ENCODE measurements at regions of chr5 and their contacts with region 1.

Region 1: GRCh38 chr5:139293504-139294373 is at the start of gene MATR3:
- DNase-seq: peak; percentile 83 to 94 (median 91)
- ATAC-seq: peak; percentile 95
- H3K4me3 ChIP-seq: peak within 1 kb of the TSS; percentile 87
- H3K4me3 Mint-ChIP-seq: peak within 1 kb of the TSS; percentile 91 to 99 (median 98)
- H3K27ac ChIP-seq: peak within 1 kb of the TSS; percentile 98
- H3K27ac Mint-ChIP-seq: peak within 1 kb of the TSS; percentile 96 to 100 (median 99)
- H3K4me1 ChIP-seq: peaks cover 29 to 37% of the 10 kb centered on the region in 2 donors
- H3K4me1 Mint-ChIP-seq: peaks cover 33 to 51% (median 42%) of the 10 kb centered on the region in 7 donors
- H3K27me3 ChIP-seq: no peaks in the 10 kb centered on the region
- H3K27me3 Mint-ChIP-seq: no peaks in the 10 kb centered on the region
- total RNA-seq, gene MATR3: 219 to 333 (median 274) TPM

Region 2: GRCh38 chr5:138337685-138338410 is 955.9 kb before region 1 on chr5 and contains the start of gene FAM53C:
- CTCF ChIA-PET with region 1: no interaction called
- POLR2A ChIA-PET with region 1: no interaction called
- intact Hi-C with region 1: loop called in 1 of 2 experiments (anchors 5 kb)
- DNase-seq: peak; percentile 87 to 98 (median 93)
- ATAC-seq: peak; percentile 91
- H3K4me3 ChIP-seq: peak within 1 kb of the TSS; percentile 86
- H3K4me3 Mint-ChIP-seq: peak within 1 kb of the TSS; percentile 77 to 98 (median 94)
- H3K27ac ChIP-seq: peak within 1 kb of the TSS; percentile 95
- H3K27ac Mint-ChIP-seq: peak within 1 kb of the TSS; percentile 96 to 100 (median 99)
- H3K4me1 ChIP-seq: peaks cover 17 to 25% of the 10 kb centered on the region in 2 donors
- H3K4me1 Mint-ChIP-seq: peaks cover 16 to 42% (median 39%) of the 10 kb centered on the region in 7 donors
- H3K27me3 ChIP-seq: no peaks in the 10 kb centered on the region
- H3K27me3 Mint-ChIP-seq: no peaks in the 10 kb centered on the region
- total RNA-seq, gene FAM53C: 25.0 to 71.8 (median 27.7) TPM

Region 3: DNA sequence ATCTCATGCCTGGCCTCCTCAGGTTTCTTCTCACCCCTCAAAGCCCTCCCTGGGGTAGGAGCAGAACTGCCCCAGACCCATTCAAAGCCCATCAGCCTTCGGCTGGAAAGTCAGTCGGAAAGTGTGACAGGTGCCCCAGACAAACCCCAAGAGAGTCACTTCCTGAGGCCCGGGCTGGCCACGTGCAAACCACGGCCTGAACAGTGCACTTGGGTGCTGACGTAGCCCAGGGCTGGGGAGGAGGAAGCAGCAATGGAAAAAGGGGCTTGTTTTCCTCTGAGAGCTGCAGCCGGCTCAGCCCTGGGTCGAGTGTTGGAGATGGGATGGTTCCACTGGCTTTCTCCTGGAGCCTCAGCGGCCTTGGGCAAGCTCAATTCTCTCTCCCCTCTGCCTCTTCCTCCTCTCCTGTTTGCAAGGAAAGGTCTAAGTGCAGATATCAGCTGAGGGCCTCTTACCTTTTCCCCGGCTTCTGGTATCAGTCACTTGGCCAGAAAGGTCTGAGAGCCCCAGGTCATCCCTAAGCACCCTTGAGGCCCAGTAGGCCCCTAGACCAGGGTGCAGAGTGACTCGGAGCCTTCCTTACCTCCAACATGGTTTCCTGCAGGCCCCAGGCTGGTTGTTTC is 834.3 kb before region 1 on chr5:
- CTCF ChIA-PET with region 1: no interaction called
- POLR2A ChIA-PET with region 1: no interaction called
- intact Hi-C with region 1: no loop called
- DNase-seq: peak in 8 of 9 donors; percentile 57 to 93 (median 67)
- ATAC-seq: peak; percentile 58
- H3K4me3 ChIP-seq: no peak overlapping the region
- H3K4me3 Mint-ChIP-seq: peak overlapping the region; percentile 56 to 88 (median 74)
- H3K27ac ChIP-seq: peak overlapping the region; percentile 49
- H3K27ac Mint-ChIP-seq: peak overlapping the region; percentile 90 to 99 (median 97)
- H3K4me1 ChIP-seq: peaks cover 26 to 35% of the 10 kb centered on the region in 2 donors
- H3K4me1 Mint-ChIP-seq: peaks cover 23 to 48% (median 40%) of the 10 kb centered on the region in 7 donors
- H3K27me3 ChIP-seq: no peaks in the 10 kb centered on the region
- H3K27me3 Mint-ChIP-seq: no peaks in the 10 kb centered on the region

Region 4: GRCh38 chr5:139251281-139251687 is 42.5 kb before region 1 on chr5:
- CTCF ChIA-PET with region 1: no interaction called
- POLR2A ChIA-PET with region 1: no interaction called
- intact Hi-C with region 1: no loop called
- DNase-seq: peak in 1 of 9 donors; percentile 37
- ATAC-seq: peak; percentile 41
- H3K4me3 ChIP-seq: no peak overlapping the region
- H3K4me3 Mint-ChIP-seq: no peak overlapping the region
- H3K27ac ChIP-seq: no peak overlapping the region
- H3K27ac Mint-ChIP-seq: no peak overlapping the region
- H3K4me1 ChIP-seq: no peaks in the 10 kb centered on the region
- H3K4me1 Mint-ChIP-seq: peaks cover 5 to 19% (median 9%) of the 10 kb centered on the region in 7 donors
- H3K27me3 ChIP-seq: no peaks in the 10 kb centered on the region
- H3K27me3 Mint-ChIP-seq: peaks cover 0 to 4% (median 0%) of the 10 kb centered on the region in 5 donors

Region 5: GRCh38 chr5:139273572-139274289 is 20.0 kb before region 1 on chr5:
- CTCF ChIA-PET with region 1: no interaction called
- POLR2A ChIA-PET with region 1: interaction called, 40 read pairs
- intact Hi-C with region 1: loop called (anchors 1 kb)
- DNase-seq: peak; percentile 71 to 95 (median 83)
- ATAC-seq: peak; percentile 99
- H3K4me3 ChIP-seq: peak overlapping the region; percentile 71
- H3K4me3 Mint-ChIP-seq: peak overlapping the region; percentile 77 to 92 (median 90)
- H3K27ac ChIP-seq: peak overlapping the region; percentile 69
- H3K27ac Mint-ChIP-seq: peak overlapping the region; percentile 54 to 92 (median 85)
- H3K4me1 ChIP-seq: peaks cover 26 to 27% of the 10 kb centered on the region in 2 donors
- H3K4me1 Mint-ChIP-seq: peaks cover 30 to 54% (median 47%) of the 10 kb centered on the region in 7 donors
- H3K27me3 ChIP-seq: no peaks in the 10 kb centered on the region
- H3K27me3 Mint-ChIP-seq: peaks cover 0 to 3% (median 0%) of the 10 kb centered on the region in 5 donors

Region 6: DNA sequence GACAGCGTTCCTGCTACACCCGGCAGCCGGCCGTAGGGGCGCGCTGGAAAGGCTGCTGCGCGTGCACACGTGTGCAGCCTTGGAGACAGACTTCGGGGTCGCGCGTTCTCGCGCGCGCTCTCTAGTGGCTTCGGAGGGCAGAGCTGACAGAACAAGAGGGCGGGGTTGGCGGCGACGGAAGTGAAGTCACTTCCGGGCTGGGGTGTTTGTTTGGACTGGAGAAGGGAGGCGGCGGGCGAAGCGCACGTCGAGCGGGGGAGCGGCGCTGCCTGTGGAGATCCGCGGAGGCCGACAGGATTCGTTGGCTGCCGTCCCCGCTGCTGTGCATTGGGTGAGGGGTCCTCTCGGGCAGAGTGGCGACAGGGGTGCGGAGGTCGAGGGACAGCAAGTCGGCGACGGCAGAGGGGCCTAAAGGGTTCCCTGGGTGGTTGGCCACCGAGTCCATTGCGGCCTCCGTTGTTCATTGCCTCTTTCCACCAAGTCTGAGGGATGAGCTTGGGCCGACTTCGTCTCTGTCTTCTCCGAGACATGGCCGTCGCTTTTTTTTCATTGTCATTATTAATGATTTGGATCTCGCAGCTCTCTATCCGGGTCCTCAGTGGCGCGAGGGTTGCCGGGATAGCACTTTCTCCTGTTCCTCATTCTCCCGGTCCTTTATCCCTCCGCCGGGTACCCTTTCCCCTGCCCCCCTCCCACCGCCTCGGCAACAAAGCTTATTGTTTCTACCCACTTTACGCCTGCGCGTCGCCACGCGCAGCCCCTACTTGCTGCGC is 48.1 kb after region 1 on chr5 and contains the start of gene PAIP2:
- CTCF ChIA-PET with region 1: interaction called, 4 read pairs
- POLR2A ChIA-PET with region 1: interaction called, 61 read pairs
- intact Hi-C with region 1: loop called (anchors 1 kb)
- DNase-seq: peak; percentile 94 to 98 (median 97)
- ATAC-seq: peak; percentile 95
- H3K4me3 ChIP-seq: peak within 1 kb of the TSS; percentile 96
- H3K4me3 Mint-ChIP-seq: peak within 1 kb of the TSS; percentile 95 to 100 (median 98)
- H3K27ac ChIP-seq: peak within 1 kb of the TSS; percentile 98
- H3K27ac Mint-ChIP-seq: peak within 1 kb of the TSS; percentile 96 to 100 (median 99)
- H3K4me1 ChIP-seq: peaks cover 28 to 30% of the 10 kb centered on the region in 2 donors
- H3K4me1 Mint-ChIP-seq: peaks cover 34 to 65% (median 55%) of the 10 kb centered on the region in 7 donors
- H3K27me3 ChIP-seq: no peaks in the 10 kb centered on the region
- H3K27me3 Mint-ChIP-seq: peaks cover 0 to 5% (median 0%) of the 10 kb centered on the region in 5 donors
- total RNA-seq, gene PAIP2: 88.8 to 121 (median 106) TPM

Region 7: DNA sequence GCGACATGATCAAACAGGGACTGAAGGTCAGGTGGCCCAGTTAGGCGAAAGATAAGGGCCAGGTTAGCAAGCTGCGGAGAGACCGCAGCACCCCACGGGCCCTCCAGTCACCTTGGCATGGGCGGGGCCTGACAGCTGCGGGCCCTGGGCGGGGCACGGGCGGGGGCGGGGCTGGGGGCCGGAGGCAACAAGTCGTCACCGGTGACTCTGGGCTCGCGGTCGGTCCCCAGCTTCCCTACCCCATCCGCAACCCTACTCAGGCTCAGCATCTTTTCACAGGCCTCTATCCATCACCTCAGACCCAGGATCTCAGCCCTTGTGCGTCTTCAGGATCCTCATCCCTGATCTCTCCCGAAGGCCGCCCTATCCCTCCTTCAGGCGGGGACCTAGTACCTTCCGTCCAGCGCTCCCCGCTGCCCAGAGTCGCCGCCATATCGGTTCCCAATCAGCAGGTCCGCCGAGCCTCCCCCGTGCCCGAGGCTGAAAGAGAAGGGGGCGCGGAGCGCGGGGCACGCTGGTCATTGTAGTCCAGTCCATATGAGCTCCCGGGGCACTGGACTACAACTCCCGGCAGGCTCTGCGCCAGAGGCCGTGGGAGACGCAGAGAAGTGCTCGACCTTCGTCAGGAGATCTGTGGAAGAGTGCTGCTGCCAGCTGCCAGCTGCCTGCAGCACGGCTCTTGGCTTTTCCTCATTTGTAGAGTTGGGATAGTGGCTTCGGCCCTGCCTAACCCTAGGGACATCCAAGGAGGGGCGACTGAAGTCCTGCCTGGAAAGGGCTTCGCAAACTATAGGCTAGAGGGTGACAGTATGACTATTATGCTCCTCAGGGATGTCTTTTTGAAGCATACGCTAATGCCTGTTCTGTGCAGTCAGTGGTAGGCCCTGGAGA is 145.5 kb after region 1 on chr5 and contains the start of gene DNAJC18:
- CTCF ChIA-PET with region 1: no interaction called
- POLR2A ChIA-PET with region 1: interaction called, 7 read pairs
- intact Hi-C with region 1: loop called in 1 of 2 experiments (anchors 1 kb)
- DNase-seq: peak; percentile 71 to 90 (median 85)
- ATAC-seq: peak; percentile 96
- H3K4me3 ChIP-seq: peak within 1 kb of the TSS; percentile 86
- H3K4me3 Mint-ChIP-seq: peak within 1 kb of the TSS; percentile 84 to 99 (median 98)
- H3K27ac ChIP-seq: peak within 1 kb of the TSS; percentile 100
- H3K27ac Mint-ChIP-seq: peak within 1 kb of the TSS; percentile 96 to 100 (median 99)
- H3K4me1 ChIP-seq: peaks cover 15 to 26% of the 10 kb centered on the region in 2 donors
- H3K4me1 Mint-ChIP-seq: peaks cover 23 to 64% (median 45%) of the 10 kb centered on the region in 7 donors
- H3K27me3 ChIP-seq: no peaks in the 10 kb centered on the region
- H3K27me3 Mint-ChIP-seq: no peaks in the 10 kb centered on the region
- total RNA-seq, gene DNAJC18: 2.2 to 9.7 (median 4.9) TPM

Region 8: DNA sequence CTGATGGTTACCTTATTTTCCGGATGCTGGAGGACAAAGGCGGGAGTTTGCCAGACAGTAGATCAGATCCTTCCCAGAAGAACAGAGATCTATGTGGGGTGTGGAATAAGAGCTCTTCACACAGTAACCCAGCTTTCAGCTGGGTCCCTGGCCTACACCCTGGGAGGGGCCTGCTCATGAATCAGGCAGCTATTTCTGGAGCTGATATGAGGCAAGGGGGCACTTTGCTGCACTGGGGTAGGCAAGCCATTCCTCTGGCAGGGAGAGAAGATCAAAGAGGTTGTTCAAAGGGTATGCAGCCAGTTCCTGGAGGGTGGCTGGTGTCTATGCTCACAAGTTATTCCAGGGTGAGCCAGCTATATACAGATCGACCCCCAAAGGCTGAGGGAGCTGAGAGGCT is 929.8 kb after region 1 on chr5:
- CTCF ChIA-PET with region 1: no interaction called
- POLR2A ChIA-PET with region 1: no interaction called
- intact Hi-C with region 1: no loop called
- DNase-seq: no peak
- ATAC-seq: no peak
- H3K4me3 ChIP-seq: no peak overlapping the region
- H3K4me3 Mint-ChIP-seq: no peak overlapping the region
- H3K27ac ChIP-seq: no peak overlapping the region
- H3K27ac Mint-ChIP-seq: no peak overlapping the region
- H3K4me1 ChIP-seq: no peaks in the 10 kb centered on the region
- H3K4me1 Mint-ChIP-seq: peaks cover 0 to 23% (median 0%) of the 10 kb centered on the region in 7 donors
- H3K27me3 ChIP-seq: no peaks in the 10 kb centered on the region
- H3K27me3 Mint-ChIP-seq: peaks cover 0 to 4% (median 0%) of the 10 kb centered on the region in 5 donors

Region 9: DNA sequence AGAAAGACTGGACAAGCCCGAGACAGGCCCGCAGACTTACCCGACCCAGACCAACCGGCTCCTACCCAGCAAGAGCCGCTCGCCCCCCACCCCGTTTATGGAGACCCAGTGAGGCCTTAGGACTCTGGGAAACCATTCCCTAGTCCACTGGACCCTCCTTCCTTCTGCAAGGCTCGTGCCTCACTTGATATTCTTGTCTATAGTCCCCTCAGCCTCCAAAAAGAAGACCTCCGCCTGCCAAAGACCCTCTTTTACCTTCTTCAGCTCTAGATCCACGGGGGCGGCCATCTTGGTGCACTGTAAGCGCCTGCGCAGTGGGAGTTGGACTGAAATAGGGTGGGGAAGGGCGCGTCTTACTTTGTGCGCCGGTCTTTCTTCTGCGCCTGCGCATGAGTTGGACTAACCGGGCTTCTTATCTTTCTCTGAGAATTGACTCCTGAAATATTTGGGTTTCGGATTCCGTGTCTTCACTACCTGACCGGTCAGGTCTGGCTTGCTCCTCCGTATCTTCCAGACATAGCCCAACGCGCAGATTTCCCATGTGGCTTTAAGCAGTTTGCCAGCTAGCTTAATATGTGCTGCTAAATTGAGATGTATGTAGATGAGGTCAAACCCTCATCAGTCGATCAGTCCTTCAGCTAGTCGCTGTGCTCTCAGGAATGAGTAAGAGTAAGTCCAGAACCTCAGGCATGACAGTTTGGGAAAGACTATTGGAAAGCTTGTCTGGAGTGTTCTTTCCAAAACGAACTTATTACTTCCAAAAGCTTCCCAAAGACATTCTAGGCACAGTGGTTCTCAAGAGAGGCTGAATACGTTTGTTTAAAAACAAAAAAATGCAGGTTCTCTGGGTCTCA is 1009.3 kb after region 1 on chr5 and contains the start of gene PFDN1:
- CTCF ChIA-PET with region 1: no interaction called
- POLR2A ChIA-PET with region 1: no interaction called
- intact Hi-C with region 1: no loop called
- DNase-seq: peak; percentile 79 to 94 (median 89)
- ATAC-seq: peak; percentile 99
- H3K4me3 ChIP-seq: peak within 1 kb of the TSS; percentile 90
- H3K4me3 Mint-ChIP-seq: peak within 1 kb of the TSS; percentile 92 to 100 (median 98)
- H3K27ac ChIP-seq: peak within 1 kb of the TSS; percentile 91
- H3K27ac Mint-ChIP-seq: peak within 1 kb of the TSS; percentile 95 to 100 (median 98)
- H3K4me1 ChIP-seq: peaks cover 10 to 11% of the 10 kb centered on the region in 2 donors
- H3K4me1 Mint-ChIP-seq: peaks cover 4 to 39% (median 33%) of the 10 kb centered on the region in 7 donors
- H3K27me3 ChIP-seq: no peaks in the 10 kb centered on the region
- H3K27me3 Mint-ChIP-seq: peaks cover 0 to 9% (median 5%) of the 10 kb centered on the region in 5 donors
- total RNA-seq, gene PFDN1: 24.8 to 52.7 (median 28.2) TPM